ENCODE measurements at regions of chr7 and their contacts with region 1.

Region 1: GRCh38 chr7:135335628-135336139 is 102.0 kb downstream of the STRA8 start:
- DNase-seq: peak in 2 of 5 donors; percentile 4 to 8
- H3K4me3 ChIP-seq: no peak overlapping the region
- H3K4me3 Mint-ChIP-seq: no peak overlapping the region
- H3K27ac ChIP-seq: no peak overlapping the region
- H3K27ac Mint-ChIP-seq: no peak overlapping the region
- H3K4me1 ChIP-seq: no peaks in the 10 kb centered on the region
- H3K4me1 Mint-ChIP-seq: peaks cover 0 to 2% (median 0%) of the 10 kb centered on the region in 3 donors
- H3K27me3 ChIP-seq: no peaks in the 10 kb centered on the region
- H3K27me3 Mint-ChIP-seq: peaks cover 2 to 3% of the 10 kb centered on the region in 2 donors

Region 2: DNA sequence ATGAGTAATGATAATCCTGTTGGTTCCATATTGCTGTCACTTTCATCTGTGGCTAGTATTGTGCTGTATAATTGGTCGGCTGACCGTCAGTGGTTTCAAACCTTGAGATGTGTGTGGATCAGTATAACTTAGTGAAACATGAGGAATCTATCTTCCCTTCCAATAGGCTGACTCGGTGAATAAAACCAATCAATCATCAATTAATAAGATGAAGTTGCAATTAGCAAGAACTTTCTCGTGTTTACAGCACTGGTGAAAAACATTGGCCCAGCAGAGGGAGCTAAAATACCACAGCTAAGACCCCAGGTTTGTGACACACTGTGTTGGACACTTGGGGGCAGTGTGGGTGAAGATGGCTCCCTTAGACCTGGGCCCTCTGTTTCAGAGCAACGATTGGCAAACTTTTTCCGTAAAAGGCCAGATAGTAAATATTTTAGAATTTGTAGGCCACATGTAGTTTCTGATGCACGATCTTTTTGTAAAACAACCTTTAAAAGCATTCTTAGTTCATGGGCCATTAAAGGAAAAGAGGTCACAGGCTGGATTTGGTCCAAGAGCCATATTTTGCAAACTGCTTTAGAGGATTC is 54.2 kb before region 1 on chr7:
- CTCF ChIA-PET with region 1: interaction called, 23 read pairs
- POLR2A ChIA-PET with region 1: no interaction called
- DNase-seq: peak; percentile 55 to 81 (median 70)
- H3K4me3 ChIP-seq: no peak overlapping the region
- H3K4me3 Mint-ChIP-seq: peak overlapping the region in 3 of 7 donors; percentile 2 to 29 (median 24)
- H3K27ac ChIP-seq: no peak overlapping the region
- H3K27ac Mint-ChIP-seq: peak overlapping the region in 1 of 8 donors; percentile 84
- H3K4me1 ChIP-seq: peaks cover 4% of the 10 kb centered on the region
- H3K4me1 Mint-ChIP-seq: peaks cover 22% of the 10 kb centered on the region in 3 donors
- H3K27me3 ChIP-seq: no peaks in the 10 kb centered on the region
- H3K27me3 Mint-ChIP-seq: peaks cover 2 to 25% of the 10 kb centered on the region in 2 donors

Region 3: DNA sequence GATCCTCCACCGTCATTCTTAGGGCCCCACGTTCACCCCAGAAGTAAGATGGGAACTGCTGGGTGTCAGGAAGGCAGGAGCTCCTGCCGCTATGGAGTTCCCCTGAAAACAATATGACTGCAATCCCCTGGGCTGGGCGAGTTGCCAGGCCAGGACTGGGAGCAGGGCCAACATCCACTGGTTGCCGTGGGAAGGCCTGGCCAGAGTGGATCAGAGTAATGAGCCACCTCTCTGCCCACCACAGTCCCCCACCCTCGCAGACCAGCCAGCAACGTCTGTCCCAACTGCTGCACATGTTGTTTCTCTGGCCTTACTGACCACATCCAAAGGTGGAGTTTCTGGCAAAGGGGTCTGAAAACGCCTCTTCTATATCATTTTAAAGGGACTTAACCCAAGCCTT is 15.4 kb before region 1 on chr7:
- CTCF ChIA-PET with region 1: no interaction called
- POLR2A ChIA-PET with region 1: no interaction called
- DNase-seq: no peak
- H3K4me3 ChIP-seq: no peak overlapping the region
- H3K4me3 Mint-ChIP-seq: no peak overlapping the region
- H3K27ac ChIP-seq: no peak overlapping the region
- H3K27ac Mint-ChIP-seq: no peak overlapping the region
- H3K4me1 ChIP-seq: no peaks in the 10 kb centered on the region
- H3K4me1 Mint-ChIP-seq: no peaks in the 10 kb centered on the region
- H3K27me3 ChIP-seq: no peaks in the 10 kb centered on the region
- H3K27me3 Mint-ChIP-seq: peaks cover 0 to 8% of the 10 kb centered on the region in 2 donors

Region 4: GRCh38 chr7:135349746-135350379 is 14.2 kb after region 1 on chr7:
- CTCF ChIA-PET with region 1: no interaction called
- POLR2A ChIA-PET with region 1: no interaction called
- DNase-seq: no peak
- H3K4me3 ChIP-seq: no peak overlapping the region
- H3K4me3 Mint-ChIP-seq: no peak overlapping the region
- H3K27ac ChIP-seq: no peak overlapping the region
- H3K27ac Mint-ChIP-seq: no peak overlapping the region
- H3K4me1 ChIP-seq: no peaks in the 10 kb centered on the region
- H3K4me1 Mint-ChIP-seq: no peaks in the 10 kb centered on the region
- H3K27me3 ChIP-seq: no peaks in the 10 kb centered on the region
- H3K27me3 Mint-ChIP-seq: peaks cover 0 to 1% of the 10 kb centered on the region in 2 donors

Measured in CD8-positive, alpha-beta memory T cell (primary cell).